Left cardiac atrium (tissue), 4 donors: ENCODE measurements at regions of chr12 and their contacts with region 1.

Region 1: GRCh38 chr12:114174326-114174725 is 208.2 kb upstream of the RBM19 start:
- DNase-seq: no peak
- ATAC-seq: peak; percentile 52 to 54

Region 2: GRCh38 chr12:114339626-114340025 is 165.3 kb after region 1 on chr12:
- intact Hi-C with region 1: loop called in 1 of 2 experiments (anchors 10 kb)
- DNase-seq: no peak
- ATAC-seq: no peak